ENCODE measurements at regions of chr3 and their contacts with region 1.

Region 1: DNA sequence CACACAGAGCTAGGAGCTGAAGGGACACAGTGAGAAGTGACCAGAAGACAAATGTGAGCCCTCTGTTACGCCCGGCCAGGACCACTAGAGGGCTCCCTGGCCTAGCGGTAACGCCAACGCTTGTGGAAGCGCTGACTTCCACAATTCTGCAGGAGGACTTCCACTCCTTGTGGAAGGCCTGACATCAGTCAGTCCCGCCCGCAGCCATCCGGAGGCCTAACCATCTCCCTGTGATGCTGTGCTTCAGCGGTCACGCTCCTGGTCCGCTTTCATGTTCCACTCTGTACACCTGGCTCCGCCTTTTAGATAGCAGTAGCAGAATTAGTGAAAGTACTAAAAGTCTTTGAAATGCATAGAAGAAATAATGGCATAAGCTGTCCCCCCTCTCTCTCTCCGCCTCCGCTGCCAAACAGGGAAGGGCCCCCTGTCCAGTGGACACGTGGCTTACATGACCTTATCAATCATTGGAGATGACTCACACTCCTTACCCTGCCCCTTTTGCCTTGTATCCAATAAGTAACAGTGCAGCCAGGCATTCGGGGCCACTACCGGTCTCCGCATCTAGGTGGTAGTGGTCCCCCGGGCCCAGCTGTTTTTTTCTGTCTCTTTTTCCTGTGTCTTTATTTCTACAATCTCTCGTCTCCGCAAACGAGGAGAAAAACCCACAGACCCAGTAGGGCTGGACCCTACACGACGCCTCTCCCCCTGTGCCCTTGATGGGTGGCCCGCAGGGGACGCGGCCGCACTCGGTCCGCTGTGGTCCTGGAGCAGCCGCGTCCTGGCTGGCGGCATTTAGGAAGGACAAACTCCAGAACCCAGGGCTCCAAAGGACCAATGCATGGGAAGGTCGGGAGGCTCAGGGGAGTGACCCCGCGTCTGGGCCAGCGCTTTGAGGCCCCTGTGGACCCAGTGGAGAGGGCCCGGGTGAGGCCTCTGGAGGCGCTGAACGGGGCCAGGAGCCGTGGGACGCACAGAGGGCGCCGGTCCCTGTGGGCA is 27.0 kb upstream of the RPL32 start:
- ATAC-seq: peak; percentile 83 to 92 (median 88)
- H3K4me3 ChIP-seq: peak overlapping the region; percentile 24 to 45 (median 41)
- H3K27ac ChIP-seq: peak overlapping the region; percentile 82 to 87
- H3K4me1 ChIP-seq: peaks cover 21 to 27% of the 10 kb centered on the region in 2 donors

Region 2: DNA sequence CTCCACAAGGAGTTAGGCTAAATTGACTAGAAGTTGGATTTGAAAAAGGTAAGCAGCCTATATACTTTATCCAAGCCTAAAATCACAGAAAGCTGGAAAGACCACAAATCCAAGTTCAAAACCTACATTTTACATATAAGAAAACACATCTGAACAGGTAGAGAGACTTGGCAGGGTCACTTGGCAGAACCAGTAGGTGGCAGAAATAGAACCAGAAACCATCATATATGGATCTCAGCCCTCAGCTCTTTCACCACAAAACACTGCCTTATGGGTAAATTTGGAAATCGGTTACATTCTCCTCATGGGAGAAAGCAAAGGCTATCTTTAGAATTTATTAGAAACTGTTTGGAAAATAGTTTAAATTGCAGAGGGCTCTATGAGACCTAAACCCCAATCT is 267.3 kb before region 1 on chr3:
- in situ Hi-C with region 1: no loop called
- ATAC-seq: no peak
- H3K4me3 ChIP-seq: no peak overlapping the region
- H3K27ac ChIP-seq: no peak overlapping the region
- H3K4me1 ChIP-seq: no peaks in the 10 kb centered on the region

Region 3: DNA sequence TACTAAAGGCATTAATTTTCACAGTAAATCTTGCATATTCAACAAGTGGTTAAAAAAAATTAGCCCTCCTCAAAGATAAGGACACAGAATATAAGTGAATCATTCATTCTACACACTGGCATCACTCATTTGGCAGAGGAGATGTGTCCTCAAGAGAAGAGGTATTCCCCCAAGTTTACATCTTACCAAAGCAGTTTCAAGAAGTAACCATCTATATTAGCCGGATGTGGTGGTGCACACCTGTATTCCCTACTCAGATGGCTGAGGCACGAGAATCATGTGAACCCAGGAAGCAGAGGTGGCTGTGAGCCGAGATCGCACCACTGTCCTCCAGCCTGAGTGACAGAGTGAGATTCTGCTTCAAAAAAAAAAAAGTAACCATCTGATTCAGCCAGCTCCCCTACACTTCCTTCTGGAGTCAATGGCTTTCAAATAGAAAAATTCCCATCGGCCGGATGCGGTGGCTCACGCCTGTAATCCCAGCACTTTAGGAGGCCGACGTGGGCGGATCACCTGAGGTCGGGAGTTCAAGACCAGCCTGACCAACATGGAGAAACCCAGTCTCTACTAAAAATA is 219.9 kb before region 1 on chr3:
- in situ Hi-C with region 1: no loop called
- ATAC-seq: no peak
- H3K4me3 ChIP-seq: no peak overlapping the region
- H3K27ac ChIP-seq: no peak overlapping the region
- H3K4me1 ChIP-seq: no peaks in the 10 kb centered on the region

Region 4: GRCh38 chr3:12689993-12690617 is 178.2 kb before region 1 on chr3:
- in situ Hi-C with region 1: no loop called
- ATAC-seq: no peak
- H3K4me3 ChIP-seq: no peak overlapping the region
- H3K27ac ChIP-seq: no peak overlapping the region
- H3K4me1 ChIP-seq: no peaks in the 10 kb centered on the region

Region 5: DNA sequence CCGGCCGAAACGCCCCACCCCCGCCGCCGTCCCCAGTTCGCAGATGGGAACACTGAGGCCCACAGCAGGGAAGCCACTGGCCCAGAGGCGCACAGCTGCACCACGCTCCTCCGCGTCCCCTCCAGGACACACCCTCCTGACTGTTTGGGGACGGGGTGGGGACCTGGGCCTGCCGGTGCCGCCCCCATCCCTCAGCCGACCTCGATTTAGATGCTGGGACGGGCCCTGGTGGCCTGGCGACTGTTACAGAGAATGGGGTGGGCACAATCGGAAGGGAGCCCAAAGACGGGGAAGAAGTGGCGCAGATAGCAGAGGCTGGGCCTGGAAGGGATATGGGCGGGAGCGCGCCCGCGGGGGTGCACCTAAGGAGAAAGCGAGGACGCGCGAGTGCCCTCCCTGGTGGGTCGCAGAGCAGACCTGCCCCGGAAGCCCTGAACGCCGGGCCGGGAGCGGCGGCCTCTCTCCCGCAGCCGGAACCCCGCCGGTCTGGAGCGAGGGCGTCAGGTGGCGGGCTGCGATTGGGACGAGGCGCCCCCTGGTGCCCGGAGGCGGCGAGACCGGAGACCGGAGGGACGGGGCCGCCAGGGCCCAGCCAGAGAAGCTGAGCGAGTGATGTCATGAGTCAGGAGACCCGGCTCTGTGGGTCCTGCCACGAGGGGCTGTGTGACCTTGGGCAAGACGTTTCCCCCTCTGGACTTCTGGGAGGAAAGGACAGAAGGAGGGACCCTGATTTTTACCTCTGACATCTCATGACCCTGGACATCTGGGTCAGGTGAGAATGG is 126.5 kb after region 1 on chr3:
- in situ Hi-C with region 1: loop called in 1 of 9 experiments (anchors 25 kb)
- ATAC-seq: peak; percentile 73 to 90 (median 83)
- H3K4me3 ChIP-seq: peak overlapping the region; percentile 46 to 58 (median 52)
- H3K27ac ChIP-seq: peak overlapping the region in 1 of 2 donors; percentile 49
- H3K4me1 ChIP-seq: peaks cover 15 to 18% of the 10 kb centered on the region in 2 donors

Region 6: GRCh38 chr3:13433912-13434311 is 565.6 kb after region 1 on chr3:
- in situ Hi-C with region 1: no loop called
- ATAC-seq: peak in 4 of 8 experiments; percentile 21 to 60 (median 53)
- H3K4me3 ChIP-seq: no peak overlapping the region
- H3K27ac ChIP-seq: peak overlapping the region in 1 of 2 donors; percentile 42
- H3K4me1 ChIP-seq: peaks cover 13 to 16% of the 10 kb centered on the region in 2 donors

Measured in motor neuron (in vitro differentiated cells).